ENCODE measurements at regions of chr13 and their contacts with region 1.

Region 1: DNA sequence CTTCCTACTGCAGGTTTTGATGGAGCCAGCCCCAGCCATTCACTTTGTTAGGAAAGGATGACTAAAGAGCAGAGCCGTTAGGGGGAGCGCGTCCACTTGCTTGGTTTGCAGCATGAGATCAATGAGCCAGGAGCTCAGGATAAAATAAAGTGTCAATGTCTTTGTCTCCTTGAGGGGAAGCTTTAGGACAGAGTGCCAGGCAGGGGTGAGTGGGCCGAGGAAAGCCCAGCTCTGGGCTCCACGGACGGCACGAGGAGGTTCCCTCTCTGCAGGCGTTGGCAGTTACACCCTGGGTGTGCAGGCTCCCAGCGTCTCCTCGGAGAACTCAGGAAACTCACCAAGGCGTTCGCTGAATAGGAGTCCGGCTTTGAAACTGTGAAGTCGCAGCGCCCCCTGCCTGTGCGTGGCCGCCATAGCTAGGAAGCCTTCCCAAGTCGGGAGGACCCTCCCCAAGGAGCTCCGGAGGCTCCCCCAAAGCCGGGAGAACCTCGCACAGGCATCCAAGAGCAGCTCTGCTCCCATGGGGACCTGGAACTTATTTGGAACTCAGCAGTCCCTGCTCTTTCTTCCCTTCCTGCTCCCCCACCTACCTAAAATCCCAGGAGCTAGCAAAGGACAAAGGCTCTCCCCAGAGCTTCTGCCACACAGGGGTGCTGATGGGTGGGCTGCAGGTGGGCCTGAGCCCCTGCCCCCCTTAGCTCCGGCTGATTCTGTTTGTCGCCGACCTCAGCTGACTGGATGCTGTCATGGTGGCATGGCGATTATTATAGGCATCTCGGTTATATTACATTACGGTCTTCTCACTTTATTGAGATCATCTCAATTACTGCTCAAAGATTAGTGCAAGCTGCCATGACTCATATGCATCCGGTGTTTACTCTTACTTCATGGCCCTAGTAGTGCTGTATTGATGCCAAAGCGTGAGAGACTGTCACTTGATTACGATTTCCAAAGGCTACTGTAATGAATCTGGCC is 34.4 kb downstream of the GSX1 start:
- DNase-seq: peak; percentile 78
- H3K4me3 ChIP-seq: no peak overlapping the region
- H3K27ac ChIP-seq: no peak overlapping the region
- H3K4me1 ChIP-seq: peaks cover 0 to 12% of the 10 kb centered on the region in 2 donors
- H3K27me3 ChIP-seq: no peaks in the 10 kb centered on the region
- CTCF ChIP-seq: peak; percentile 70 to 92 (median 89)
- POLR2A ChIP-seq: no peak

Region 2: GRCh38 chr13:26985285-26985878 is 841.3 kb before region 1 on chr13:
- intact Hi-C with region 1: loop called (anchors 10 kb)
- DNase-seq: peak; percentile 66 to 67
- H3K4me3 ChIP-seq: no peak overlapping the region
- H3K27ac ChIP-seq: no peak overlapping the region
- H3K4me1 ChIP-seq: no peaks in the 10 kb centered on the region
- H3K27me3 ChIP-seq: no peaks in the 10 kb centered on the region
- CTCF ChIP-seq: peak; percentile 31 to 88 (median 78)
- POLR2A ChIP-seq: no peak

Region 3: GRCh38 chr13:27374650-27375049 is 452.0 kb before region 1 on chr13:
- intact Hi-C with region 1: loop called (anchors 5 kb)
- DNase-seq: peak; percentile 53 to 70
- H3K4me3 ChIP-seq: no peak overlapping the region
- H3K27ac ChIP-seq: no peak overlapping the region
- H3K4me1 ChIP-seq: no peaks in the 10 kb centered on the region
- H3K27me3 ChIP-seq: no peaks in the 10 kb centered on the region
- CTCF ChIP-seq: peak; percentile 27 to 77 (median 57)
- POLR2A ChIP-seq: no peak

Region 4: DNA sequence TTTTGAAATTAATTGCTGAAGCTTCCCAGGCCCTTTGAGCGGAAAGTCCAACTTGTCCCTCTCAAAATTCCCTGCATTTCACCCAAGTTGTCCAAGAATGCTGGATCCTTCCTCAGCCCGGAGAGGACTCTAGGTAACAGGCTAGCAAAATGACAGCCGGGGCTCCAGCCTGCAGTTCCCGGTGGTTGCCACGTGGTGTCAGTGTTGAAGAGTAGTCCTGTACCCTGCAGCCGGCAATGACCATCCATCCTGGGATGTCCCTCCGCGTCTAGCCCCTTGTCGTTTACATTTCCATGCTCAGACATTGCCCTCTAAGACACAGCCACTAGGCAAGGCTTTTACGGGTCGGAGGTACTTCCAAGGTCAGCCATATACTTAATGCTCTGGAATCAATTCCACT is 344.9 kb before region 1 on chr13:
- intact Hi-C with region 1: loop called (anchors 5 kb)
- DNase-seq: peak; percentile 49 to 51
- H3K4me3 ChIP-seq: no peak overlapping the region
- H3K27ac ChIP-seq: no peak overlapping the region
- H3K4me1 ChIP-seq: no peaks in the 10 kb centered on the region
- H3K27me3 ChIP-seq: no peaks in the 10 kb centered on the region
- CTCF ChIP-seq: peak; percentile 31 to 61 (median 56)
- POLR2A ChIP-seq: no peak

Region 5: GRCh38 chr13:27533155-27533643 is 293.5 kb before region 1 on chr13:
- intact Hi-C with region 1: loop called (anchors 2 kb)
- DNase-seq: peak; percentile 87 to 93
- H3K4me3 ChIP-seq: no peak overlapping the region
- H3K27ac ChIP-seq: no peak overlapping the region
- H3K4me1 ChIP-seq: peaks cover 32 to 37% of the 10 kb centered on the region in 2 donors
- H3K27me3 ChIP-seq: no peaks in the 10 kb centered on the region
- CTCF ChIP-seq: peak; percentile 80 to 97 (median 90)
- POLR2A ChIP-seq: no peak

Region 6: GRCh38 chr13:27980280-27980998 is 153.8 kb after region 1 on chr13:
- intact Hi-C with region 1: loop called (anchors 5 kb)
- DNase-seq: no peak
- H3K4me3 ChIP-seq: no peak overlapping the region
- H3K27ac ChIP-seq: no peak overlapping the region
- H3K4me1 ChIP-seq: peaks cover 0 to 18% of the 10 kb centered on the region in 2 donors
- H3K27me3 ChIP-seq: peaks cover 39% of the 10 kb centered on the region
- CTCF ChIP-seq: no peak
- POLR2A ChIP-seq: no peak

Measured in thyroid gland (tissue), 4 donors.